SK-N-SH (cell line): ENCODE measurements at regions of chr7 and their contacts with region 1.

Region 1: DNA sequence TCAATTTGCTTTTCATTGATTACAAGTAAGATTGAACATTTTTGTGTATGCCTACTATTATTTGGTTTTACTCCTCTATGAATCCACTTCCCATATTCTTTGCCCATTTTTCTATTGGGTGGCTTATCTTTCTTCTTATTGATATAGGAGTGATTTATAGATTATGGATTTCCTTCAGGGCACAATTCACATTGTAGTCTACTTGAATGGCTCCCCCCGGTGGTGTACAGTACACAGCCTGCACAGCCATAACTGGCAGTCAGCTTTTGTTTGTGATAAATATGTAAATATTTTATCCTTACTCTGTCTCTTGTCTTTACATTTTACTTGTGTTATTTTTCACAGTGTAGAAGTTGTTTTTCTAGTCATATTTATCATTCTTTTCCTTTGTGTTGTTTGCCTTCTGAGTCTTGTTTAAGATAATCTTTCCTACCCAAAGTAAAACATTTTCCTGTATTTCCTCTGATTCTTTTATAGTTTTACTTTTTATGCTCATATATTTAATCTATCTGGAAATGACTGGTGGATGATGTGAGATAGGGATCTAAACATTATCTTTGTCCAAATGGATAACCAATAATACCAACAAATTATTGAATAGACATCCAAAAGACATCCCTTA is 23.9 kb upstream of the CALD1 start:
- DNase-seq: peak; percentile 46
- H3K4me3 ChIP-seq: no peak overlapping the region
- H3K27ac ChIP-seq: no peak overlapping the region
- H3K4me1 ChIP-seq: peaks cover 0 to 5% of the 10 kb centered on the region in 2 experiments; a peak in 1 of 4 replicates
- H3K27me3 ChIP-seq: no peaks in the 10 kb centered on the region
- CTCF ChIP-seq: peak; percentile 97
- EP300 ChIP-seq: no peak
- RAD21 ChIP-seq: peak; percentile 57

Region 2: DNA sequence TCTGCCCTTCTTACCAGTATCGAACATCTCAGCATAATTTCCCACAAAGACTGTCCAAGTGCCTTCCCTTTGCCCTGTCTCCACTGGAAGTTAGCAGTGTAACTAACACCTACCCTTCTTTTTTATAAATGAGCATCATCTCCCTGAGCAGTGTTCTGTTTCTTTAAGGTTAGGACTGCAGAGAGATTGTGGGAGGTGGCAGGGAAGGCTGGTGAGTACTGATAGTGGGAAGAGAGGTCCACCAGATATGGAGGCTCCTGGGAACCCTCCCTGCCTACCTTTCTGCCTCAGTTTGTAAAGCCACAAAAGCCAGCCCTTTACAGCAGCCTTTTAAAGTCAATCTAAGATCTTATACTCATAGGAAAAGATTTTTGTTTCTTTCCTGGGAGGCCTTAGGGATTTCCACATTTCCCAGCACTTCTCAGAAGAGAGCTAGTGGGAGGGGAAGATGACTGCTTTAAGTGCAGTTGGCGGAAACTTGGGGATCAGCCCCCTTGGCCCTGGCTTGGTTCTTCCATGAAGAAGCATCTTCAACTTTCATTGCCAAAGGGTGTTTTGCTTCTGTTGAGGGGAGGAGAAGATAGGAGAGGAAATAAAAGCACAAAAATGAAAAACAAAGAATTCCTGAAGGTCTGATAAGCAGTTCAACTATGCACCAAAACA is 12.7 kb before region 1 on chr7:
- CTCF ChIA-PET with region 1: interaction called, 17 read pairs
- POLR2A ChIA-PET with region 1: no interaction called
- DNase-seq: no peak
- H3K4me3 ChIP-seq: no peak overlapping the region
- H3K27ac ChIP-seq: peak overlapping the region; percentile 13 to 55; a peak in 3 of 4 replicates
- H3K4me1 ChIP-seq: peaks cover 0 to 16% of the 10 kb centered on the region in 2 experiments; a peak in 3 of 4 replicates
- H3K27me3 ChIP-seq: no peaks in the 10 kb centered on the region
- CTCF ChIP-seq: no peak
- EP300 ChIP-seq: no peak
- RAD21 ChIP-seq: no peak